CD8-positive, alpha-beta memory T cell (primary cell): ENCODE measurements at regions of chr7 and their contacts with region 1.

Region 1: GRCh38 chr7:5557920-5558401 is 134.3 kb upstream of the TNRC18 start:
- DNase-seq: peak in 1 of 5 donors; percentile 37
- H3K4me3 ChIP-seq: peak overlapping the region; percentile 48
- H3K4me3 Mint-ChIP-seq: peak overlapping the region; percentile 82 to 90 (median 85)
- H3K27ac ChIP-seq: peak overlapping the region; percentile 63
- H3K27ac Mint-ChIP-seq: peak overlapping the region; percentile 90 to 98 (median 94)
- H3K4me1 ChIP-seq: peaks cover 51% of the 10 kb centered on the region
- H3K4me1 Mint-ChIP-seq: peaks cover 40 to 49% (median 43%) of the 10 kb centered on the region in 3 donors
- H3K27me3 ChIP-seq: peaks cover under 1% of the 10 kb centered on the region
- H3K27me3 Mint-ChIP-seq: peaks cover 5 to 12% of the 10 kb centered on the region in 2 donors

Region 2: DNA sequence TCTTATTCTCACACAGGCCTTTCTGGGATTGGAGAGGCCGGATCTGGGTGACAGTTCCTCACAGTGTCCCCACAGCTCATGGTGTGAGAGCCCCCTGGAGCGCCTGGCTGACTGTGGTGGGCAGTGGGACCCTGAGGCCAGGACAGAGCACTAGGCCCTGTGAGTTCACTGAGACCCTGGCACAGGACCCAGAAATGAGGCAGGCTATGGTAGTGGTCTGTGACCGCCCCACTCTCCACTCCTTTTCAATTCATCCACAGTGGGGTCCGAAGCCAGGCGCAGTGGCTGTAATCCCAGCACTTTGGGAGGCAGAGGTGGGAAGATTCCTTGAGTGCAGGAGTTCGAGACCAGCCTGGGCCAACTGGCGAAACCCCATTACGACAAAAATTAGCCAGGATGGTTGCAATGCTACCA is 38.4 kb before region 1 on chr7:
- CTCF ChIA-PET with region 1: interaction called, 17 read pairs
- POLR2A ChIA-PET with region 1: interaction called, 29 read pairs
- DNase-seq: no peak
- H3K4me3 ChIP-seq: no peak overlapping the region
- H3K4me3 Mint-ChIP-seq: no peak overlapping the region
- H3K27ac ChIP-seq: no peak overlapping the region
- H3K27ac Mint-ChIP-seq: peak overlapping the region in 1 of 8 donors; percentile 26
- H3K4me1 ChIP-seq: peaks cover 1% of the 10 kb centered on the region
- H3K4me1 Mint-ChIP-seq: peaks cover 3 to 10% (median 4%) of the 10 kb centered on the region in 3 donors
- H3K27me3 ChIP-seq: no peaks in the 10 kb centered on the region
- H3K27me3 Mint-ChIP-seq: no peaks in the 10 kb centered on the region

Region 3: DNA sequence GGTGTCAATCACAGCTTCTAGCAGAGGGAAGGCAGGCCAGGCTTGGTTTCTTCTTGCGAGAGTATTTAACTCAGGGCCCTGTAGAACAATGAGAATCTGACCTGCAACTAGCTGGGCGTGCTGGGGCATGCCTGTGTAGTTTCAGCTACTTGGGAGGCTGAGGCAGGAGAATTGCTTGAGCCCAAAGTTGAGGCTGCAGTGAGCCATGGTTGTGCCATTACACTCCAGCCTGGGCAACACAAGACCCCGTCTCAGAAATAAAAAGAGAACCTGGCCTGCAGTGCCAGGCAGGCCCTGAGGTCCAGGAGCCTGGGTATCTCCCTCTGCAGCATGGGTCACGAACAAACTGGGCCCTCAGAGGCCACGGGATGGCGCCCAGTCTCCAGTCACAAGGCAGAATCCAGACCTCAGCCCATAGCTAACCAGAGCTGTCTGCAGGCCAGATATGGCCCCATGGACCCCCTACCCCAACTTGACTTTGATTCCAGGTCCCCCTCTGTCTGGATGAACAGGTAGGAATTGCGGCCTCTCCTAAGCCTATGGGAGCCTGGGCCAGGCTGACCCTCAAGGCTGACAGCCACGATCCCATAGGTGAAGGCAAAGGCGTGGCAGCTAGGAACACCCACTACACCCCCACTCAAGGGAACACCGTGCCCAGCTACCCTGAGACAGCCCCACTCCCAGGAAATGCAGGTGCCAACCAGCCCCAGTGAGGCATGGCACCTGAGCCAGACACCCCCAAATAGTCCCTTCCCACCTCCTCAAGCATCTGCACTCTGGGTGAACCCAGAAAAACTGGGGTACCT is 31.7 kb before region 1 on chr7:
- CTCF ChIA-PET with region 1: interaction called, 31 read pairs
- POLR2A ChIA-PET with region 1: interaction called, 29 read pairs
- DNase-seq: peak in 3 of 5 donors; percentile 18 to 57 (median 37)
- H3K4me3 ChIP-seq: no peak overlapping the region
- H3K4me3 Mint-ChIP-seq: peak overlapping the region; percentile 97 to 100 (median 99)
- H3K27ac ChIP-seq: no peak overlapping the region
- H3K27ac Mint-ChIP-seq: peak overlapping the region; percentile 85 to 98 (median 94)
- H3K4me1 ChIP-seq: peaks cover 29% of the 10 kb centered on the region
- H3K4me1 Mint-ChIP-seq: peaks cover 37 to 56% (median 46%) of the 10 kb centered on the region in 3 donors
- H3K27me3 ChIP-seq: no peaks in the 10 kb centered on the region
- H3K27me3 Mint-ChIP-seq: peaks cover 0 to 27% of the 10 kb centered on the region in 2 donors

Region 4: GRCh38 chr7:5704534-5704922 is 146.6 kb after region 1 on chr7:
- CTCF ChIA-PET with region 1: interaction called, 14 read pairs
- POLR2A ChIA-PET with region 1: no interaction called
- DNase-seq: peak; percentile 44 to 80 (median 61)
- H3K4me3 ChIP-seq: no peak overlapping the region
- H3K4me3 Mint-ChIP-seq: no peak overlapping the region
- H3K27ac ChIP-seq: no peak overlapping the region
- H3K27ac Mint-ChIP-seq: peak overlapping the region in 3 of 8 donors; percentile 24 to 62 (median 37)
- H3K4me1 ChIP-seq: peaks cover 34% of the 10 kb centered on the region
- H3K4me1 Mint-ChIP-seq: peaks cover 31 to 36% (median 34%) of the 10 kb centered on the region in 3 donors
- H3K27me3 ChIP-seq: no peaks in the 10 kb centered on the region
- H3K27me3 Mint-ChIP-seq: no peaks in the 10 kb centered on the region